ENCODE measurements at regions of chr12 and their contacts with region 1.

Region 1: DNA sequence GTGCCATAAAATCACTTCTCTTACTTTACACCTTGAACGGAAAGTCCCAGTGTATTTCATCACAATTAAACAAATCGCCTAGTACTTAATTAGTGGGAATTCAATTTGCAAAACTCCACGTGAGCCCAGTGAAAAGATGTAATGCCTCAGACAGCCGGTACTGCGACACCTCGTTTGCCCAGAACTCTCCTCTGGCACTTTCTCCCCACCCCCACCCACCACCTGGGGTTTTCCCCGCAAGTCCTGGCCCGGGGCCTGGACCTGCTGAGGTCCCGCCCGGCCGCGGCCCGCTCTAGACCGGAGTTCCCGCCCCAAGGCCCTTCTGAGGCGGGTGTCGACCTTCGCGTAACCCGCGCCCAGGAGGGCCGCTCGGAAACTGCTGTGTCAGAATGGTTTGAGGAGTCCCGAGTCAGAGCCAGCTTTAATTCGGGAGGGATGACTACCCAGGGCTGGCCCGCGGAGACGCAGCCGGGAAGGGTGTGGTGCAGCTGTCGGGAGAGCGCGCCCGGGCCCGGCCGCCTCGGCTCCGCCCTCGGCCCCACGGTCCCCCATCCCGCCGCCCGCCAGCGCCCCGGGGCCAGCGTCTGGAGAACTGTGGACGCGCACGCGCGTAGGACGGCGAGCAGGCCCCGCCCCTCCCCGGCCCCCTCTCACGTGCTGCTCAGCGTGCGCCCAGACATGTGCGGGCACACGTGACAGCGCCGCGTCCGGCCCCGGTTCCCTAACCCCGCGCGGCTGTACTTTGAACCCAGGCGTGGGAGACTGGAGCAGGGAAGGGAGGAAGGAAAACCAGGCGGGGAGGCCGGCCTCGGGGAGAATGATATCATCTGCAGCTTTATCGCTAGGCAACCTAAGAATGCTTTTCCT is 10.8 kb downstream of the BHLHE41 start:
- DNase-seq: peak; percentile 93
- H3K4me3 ChIP-seq: peak overlapping the region; percentile 24 to 54 (median 36)
- H3K27ac ChIP-seq: peak overlapping the region; percentile 81
- H3K4me1 ChIP-seq: peaks cover 29% of the 10 kb centered on the region
- H3K27me3 ChIP-seq: no peaks in the 10 kb centered on the region
- CTCF ChIP-seq: peak; percentile 24 to 56

Region 2: DNA sequence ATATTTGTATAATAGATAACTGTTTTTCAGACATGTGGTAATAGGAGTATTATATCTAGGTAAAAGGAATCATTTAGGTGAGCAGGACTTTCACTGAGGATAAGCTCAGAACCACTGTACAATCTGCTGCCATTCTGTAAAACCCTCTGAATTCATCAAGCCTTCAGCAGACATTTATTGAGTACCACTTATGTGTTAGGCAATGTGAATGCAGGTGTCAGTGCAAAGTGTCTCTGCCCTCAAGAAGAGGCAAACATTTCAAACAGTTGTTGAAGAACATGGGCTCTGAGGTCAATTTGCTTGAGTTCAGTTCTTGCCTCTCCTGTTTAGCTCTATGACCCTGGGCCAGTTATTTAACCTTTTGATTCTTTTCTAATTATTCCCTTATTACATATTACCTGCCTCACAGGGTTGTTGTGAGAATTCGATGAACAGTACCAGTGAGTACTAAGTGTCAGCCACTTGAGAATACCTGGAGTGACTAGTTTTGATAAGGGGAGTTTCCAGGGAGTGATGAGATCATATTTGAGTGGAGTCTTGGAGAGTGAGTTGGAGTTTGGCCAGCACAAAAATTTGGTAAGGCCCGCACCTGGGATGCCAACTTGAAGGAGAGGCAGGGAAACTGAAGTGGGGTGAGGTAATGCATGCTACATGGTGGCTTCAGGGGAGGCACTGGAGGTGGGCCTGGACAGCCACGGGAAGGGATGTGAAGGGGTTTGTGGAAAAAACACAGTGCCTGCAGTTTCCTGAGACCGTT is 121.9 kb before region 1 on chr12:
- CTCF ChIA-PET with region 1: no interaction called
- dilution Hi-C with region 1: no loop called
- in situ Hi-C with region 1: no loop called
- intact Hi-C with region 1: no loop called
- DNase-seq: peak; percentile 89
- H3K4me3 ChIP-seq: no peak overlapping the region
- H3K27ac ChIP-seq: peak overlapping the region; percentile 2
- H3K4me1 ChIP-seq: peaks cover 16% of the 10 kb centered on the region
- H3K27me3 ChIP-seq: no peaks in the 10 kb centered on the region
- CTCF ChIP-seq: no peak

Region 3: GRCh38 chr12:26069796-26070195 is 44.3 kb before region 1 on chr12:
- CTCF ChIA-PET with region 1: no interaction called
- dilution Hi-C with region 1: loop called (anchors 5 kb)
- in situ Hi-C with region 1: no loop called
- intact Hi-C with region 1: no loop called
- DNase-seq: no peak
- H3K4me3 ChIP-seq: no peak overlapping the region
- H3K27ac ChIP-seq: no peak overlapping the region
- H3K4me1 ChIP-seq: no peaks in the 10 kb centered on the region
- H3K27me3 ChIP-seq: no peaks in the 10 kb centered on the region
- CTCF ChIP-seq: no peak

Region 4: GRCh38 chr12:26287671-26288381 is 173.7 kb after region 1 on chr12:
- CTCF ChIA-PET with region 1: no interaction called
- dilution Hi-C with region 1: no loop called
- in situ Hi-C with region 1: no loop called
- intact Hi-C with region 1: no loop called
- DNase-seq: peak; percentile 99
- H3K4me3 ChIP-seq: no peak overlapping the region
- H3K27ac ChIP-seq: peak overlapping the region; percentile 96
- H3K4me1 ChIP-seq: peaks cover 44% of the 10 kb centered on the region
- H3K27me3 ChIP-seq: no peaks in the 10 kb centered on the region
- CTCF ChIP-seq: no peak

Region 5: DNA sequence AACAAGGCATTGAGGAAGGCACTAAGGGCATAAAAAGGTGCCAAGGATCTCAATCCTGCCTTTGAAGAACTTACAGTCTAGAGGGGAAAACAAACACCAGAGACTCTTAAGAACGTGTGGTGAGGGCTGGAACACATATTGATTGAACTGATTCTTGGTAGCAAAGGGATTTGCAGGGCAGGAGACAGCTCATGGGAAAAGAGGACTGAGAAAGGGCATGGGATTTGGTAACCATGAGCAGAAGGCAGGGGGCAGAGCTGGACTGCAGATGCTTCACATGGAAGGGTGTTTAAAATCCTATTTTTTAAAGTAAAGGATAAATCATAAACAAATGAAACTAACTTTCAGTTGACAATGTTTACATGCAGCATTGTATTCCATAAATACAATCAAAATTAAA is 515.8 kb after region 1 on chr12:
- CTCF ChIA-PET with region 1: no interaction called
- dilution Hi-C with region 1: no loop called
- in situ Hi-C with region 1: loop called in 1 of 2 experiments (anchors 25 kb)
- intact Hi-C with region 1: no loop called
- DNase-seq: no peak
- H3K4me3 ChIP-seq: no peak overlapping the region
- H3K27ac ChIP-seq: no peak overlapping the region
- H3K4me1 ChIP-seq: peaks cover 24% of the 10 kb centered on the region
- H3K27me3 ChIP-seq: no peaks in the 10 kb centered on the region
- CTCF ChIP-seq: peak; percentile 8 to 32